GM12878 (cell line): ENCODE measurements at regions of chr5 and their contacts with region 1.

Region 1: DNA sequence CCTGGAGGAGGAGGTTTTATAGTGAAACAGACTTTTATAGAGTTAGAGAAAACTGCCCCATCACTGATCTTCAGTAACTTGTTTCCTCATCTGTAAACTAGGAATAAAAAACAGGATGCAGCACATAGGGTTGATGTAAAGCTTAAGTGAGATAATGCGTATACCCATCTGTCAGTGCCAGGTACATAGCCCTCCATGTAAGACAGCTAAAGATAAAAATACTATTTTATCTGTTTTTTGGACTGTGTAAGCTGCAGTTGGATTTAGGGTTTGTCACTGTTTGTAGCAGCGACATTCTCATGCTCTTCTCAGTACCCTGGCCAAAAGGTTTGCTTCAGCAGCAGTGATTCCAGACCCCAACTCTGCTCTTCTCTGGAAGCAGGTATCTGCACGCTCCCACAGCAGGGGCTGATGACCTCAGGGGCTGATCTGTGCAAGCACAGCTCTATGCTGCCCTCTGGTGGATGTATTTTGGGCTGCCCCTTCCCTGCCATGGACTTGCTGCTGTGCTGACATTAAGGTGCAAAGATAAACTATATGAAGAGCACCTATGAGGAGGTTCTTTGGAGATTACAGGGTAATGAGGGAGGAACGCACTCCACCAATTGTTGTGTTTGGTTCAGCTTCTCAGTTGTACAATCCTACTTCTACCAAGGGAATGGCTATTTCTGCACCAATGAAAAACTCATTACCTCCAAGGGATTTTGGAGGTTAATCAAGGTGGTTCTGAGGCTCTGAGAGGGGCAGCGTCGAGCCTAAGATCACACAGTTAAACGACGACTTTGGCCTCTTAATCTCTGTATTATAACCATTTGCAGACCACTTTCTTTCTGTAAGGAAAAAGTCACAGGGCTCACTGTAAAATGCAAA is 13.1 kb downstream of the HMHB1 start:
- DNase-seq: peak; percentile 81
- ATAC-seq: peak; percentile 87
- H3K4me3 ChIP-seq: no peak overlapping the region
- H3K27ac ChIP-seq: no peak overlapping the region
- H3K4me1 ChIP-seq: peaks cover 26% of the 10 kb centered on the region
- H3K27me3 ChIP-seq: no peaks in the 10 kb centered on the region
- CTCF ChIP-seq: peak; percentile 91 to 93 (median 93); a peak in 5 of 6 replicates
- EP300 ChIP-seq: no peak
- POLR2A ChIP-seq: no peak
- RAD21 ChIP-seq: peak; percentile 100

Region 2: DNA sequence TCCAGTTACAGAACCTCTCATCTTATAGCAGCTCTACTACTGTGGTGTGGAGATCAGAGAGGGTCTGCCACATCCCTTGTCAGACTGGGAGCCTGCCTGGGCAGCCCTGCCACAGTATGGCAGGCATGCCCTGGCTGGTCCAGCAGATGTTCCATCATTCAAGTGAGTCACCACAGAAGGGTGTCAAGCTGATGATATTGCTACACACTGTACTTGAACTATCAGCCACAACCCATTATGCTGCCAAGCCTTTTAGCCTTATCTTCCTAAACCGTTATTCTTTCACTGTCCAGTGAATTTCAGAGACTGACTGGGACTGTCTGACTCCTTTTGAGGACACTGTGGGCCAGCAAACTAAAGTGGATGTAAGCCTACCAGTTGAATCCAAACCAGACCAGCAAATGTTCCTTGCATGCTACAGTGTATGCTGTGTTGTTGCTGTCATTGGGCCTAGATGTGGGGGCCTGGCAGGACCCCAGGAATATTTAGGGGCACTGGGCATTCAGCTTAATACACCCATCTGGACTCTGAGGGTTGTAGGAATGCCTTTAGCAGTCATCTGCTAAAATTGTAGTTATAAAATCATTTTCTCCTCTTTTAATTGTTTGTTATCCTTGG is 624.2 kb before region 1 on chr5:
- CTCF ChIA-PET with region 1: no interaction called
- POLR2A ChIA-PET with region 1: no interaction called
- RAD21 ChIA-PET with region 1: interaction called, 5 read pairs
- SMC1A ChIA-PET with region 1: interaction called, 3 read pairs
- in situ Hi-C with region 1: no loop called
- intact Hi-C with region 1: loop called (anchors 5 kb)
- DNase-seq: no peak
- ATAC-seq: peak; percentile 69
- H3K4me3 ChIP-seq: no peak overlapping the region
- H3K27ac ChIP-seq: peak overlapping the region; percentile 14; the same call in 1 of the 2 replicates
- H3K4me1 ChIP-seq: peaks cover 17% of the 10 kb centered on the region
- H3K27me3 ChIP-seq: no peaks in the 10 kb centered on the region
- CTCF ChIP-seq: no peak
- EP300 ChIP-seq: no peak
- POLR2A ChIP-seq: no peak
- RAD21 ChIP-seq: no peak

Region 3: DNA sequence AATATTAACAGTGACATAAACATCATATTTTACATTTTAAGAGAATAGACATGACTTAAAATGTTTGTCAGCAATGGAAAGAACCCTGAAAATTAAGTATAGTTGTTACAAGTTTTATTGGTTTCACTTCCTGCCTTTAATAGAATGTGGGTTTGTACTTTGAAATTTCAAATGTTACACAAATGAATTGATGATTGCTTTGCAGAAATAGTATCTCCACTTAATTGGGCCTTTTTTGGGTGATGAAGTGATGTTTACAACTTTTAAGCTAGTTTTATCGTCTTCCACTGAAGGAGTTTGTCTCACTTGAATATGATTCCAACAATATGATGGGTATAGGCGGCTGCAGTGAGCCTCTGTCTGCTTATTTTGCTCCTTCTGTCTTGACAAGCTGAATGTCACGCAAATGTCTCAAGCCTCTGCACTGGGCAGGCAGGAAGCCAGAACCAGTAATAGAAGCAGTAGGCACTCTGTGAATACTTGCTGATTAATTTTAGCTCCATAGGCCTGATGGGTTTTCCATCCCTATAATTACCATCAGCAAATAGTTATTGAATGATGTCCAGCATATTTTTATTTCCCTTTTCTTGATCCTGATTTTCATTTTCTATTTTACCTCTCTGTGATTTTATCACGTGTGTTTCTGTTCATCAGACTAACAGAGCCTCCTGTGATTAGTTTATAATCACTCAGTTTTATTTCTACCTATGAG is 411.0 kb before region 1 on chr5:
- CTCF ChIA-PET with region 1: interaction called, 11 read pairs
- POLR2A ChIA-PET with region 1: no interaction called
- RAD21 ChIA-PET with region 1: interaction called, 5 read pairs
- SMC1A ChIA-PET with region 1: interaction called, 48 read pairs
- in situ Hi-C with region 1: loop called (anchors 5 kb)
- intact Hi-C with region 1: no loop called
- DNase-seq: no peak
- ATAC-seq: peak; percentile 71
- H3K4me3 ChIP-seq: peak overlapping the region; percentile 16; the same call in 1 of the 2 replicates
- H3K27ac ChIP-seq: peak overlapping the region; percentile 76
- H3K4me1 ChIP-seq: peaks cover 43% of the 10 kb centered on the region
- H3K27me3 ChIP-seq: no peaks in the 10 kb centered on the region
- CTCF ChIP-seq: no peak
- EP300 ChIP-seq: peak; percentile 21 to 63; a peak in 2 of 4 replicates
- POLR2A ChIP-seq: no peak
- RAD21 ChIP-seq: no peak

Region 4: GRCh38 chr5:143569213-143570082 is 255.6 kb before region 1 on chr5:
- CTCF ChIA-PET with region 1: interaction called, 11 read pairs
- POLR2A ChIA-PET with region 1: interaction called, 3 read pairs
- RAD21 ChIA-PET with region 1: interaction called, 9 read pairs
- SMC1A ChIA-PET with region 1: interaction called, 5 read pairs
- in situ Hi-C with region 1: no loop called
- intact Hi-C with region 1: loop called (anchors 2 kb)
- DNase-seq: no peak
- ATAC-seq: no peak
- H3K4me3 ChIP-seq: no peak overlapping the region
- H3K27ac ChIP-seq: no peak overlapping the region
- H3K4me1 ChIP-seq: peaks cover 9% of the 10 kb centered on the region
- H3K27me3 ChIP-seq: no peaks in the 10 kb centered on the region
- CTCF ChIP-seq: no peak
- EP300 ChIP-seq: no peak
- POLR2A ChIP-seq: no peak
- RAD21 ChIP-seq: no peak

Region 5: DNA sequence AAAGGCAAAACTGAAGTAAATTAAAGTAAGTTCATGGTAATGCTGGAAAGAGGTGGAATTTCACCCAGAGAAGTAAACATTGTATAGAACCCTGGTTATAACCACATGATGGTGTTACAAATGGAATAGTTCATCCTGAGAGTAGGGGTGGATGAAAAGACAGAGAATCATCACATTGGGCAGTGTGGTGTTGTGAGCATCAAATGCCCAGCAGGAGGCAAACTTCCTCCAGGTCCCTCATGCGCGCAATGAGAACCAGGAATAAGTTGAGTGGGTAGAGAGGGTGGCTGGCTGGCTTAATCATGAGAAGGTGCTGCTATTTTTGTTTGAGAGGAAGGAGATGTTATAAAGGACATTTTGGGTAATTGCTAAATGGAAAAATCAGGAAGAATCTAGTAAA is 176.4 kb before region 1 on chr5:
- CTCF ChIA-PET with region 1: interaction called, 16 read pairs
- POLR2A ChIA-PET with region 1: no interaction called
- RAD21 ChIA-PET with region 1: interaction called, 17 read pairs
- SMC1A ChIA-PET with region 1: interaction called, 55 read pairs
- in situ Hi-C with region 1: no loop called
- intact Hi-C with region 1: loop called (anchors 2 kb)
- DNase-seq: no peak
- ATAC-seq: 0 out of 3 replicates have a peak, but pooled peaks have one; percentile 10
- H3K4me3 ChIP-seq: no peak overlapping the region
- H3K27ac ChIP-seq: no peak overlapping the region
- H3K4me1 ChIP-seq: peaks cover 4% of the 10 kb centered on the region; the same call in 1 of the 2 replicates
- H3K27me3 ChIP-seq: no peaks in the 10 kb centered on the region
- CTCF ChIP-seq: peak in 2 of 3 experiments; percentile 16 to 22; a peak in 2 of 6 replicates
- EP300 ChIP-seq: no peak
- POLR2A ChIP-seq: no peak
- RAD21 ChIP-seq: peak; percentile 34; the same call in 1 of the 2 replicates

Region 6: GRCh38 chr5:143812085-143812705 is 12.9 kb before region 1 on chr5 and contains the start of gene HMHB1:
- CTCF ChIA-PET with region 1: interaction called, 15 read pairs
- POLR2A ChIA-PET with region 1: interaction called, 5 read pairs
- RAD21 ChIA-PET with region 1: interaction called, 6 read pairs
- SMC1A ChIA-PET with region 1: interaction called, 16 read pairs
- in situ Hi-C with region 1: no loop called
- intact Hi-C with region 1: no loop called
- DNase-seq: no peak
- ATAC-seq: peak; percentile 80
- H3K4me3 ChIP-seq: peak within 1 kb of the TSS; percentile 31
- H3K27ac ChIP-seq: peak within 1 kb of the TSS; percentile 49
- H3K4me1 ChIP-seq: peaks cover 7% of the 10 kb centered on the region; the same call in 1 of the 2 replicates
- H3K27me3 ChIP-seq: no peaks in the 10 kb centered on the region
- CTCF ChIP-seq: no peak
- EP300 ChIP-seq: no peak
- POLR2A ChIP-seq: no peak
- RAD21 ChIP-seq: no peak
- polyA plus RNA-seq, gene HMHB1: 16.0 to 20.3 TPM